B cell (primary cell): ENCODE measurements at regions of chr12 and their contacts with region 1.

Region 1: GRCh38 chr12:116599285-116600136 is 40.3 kb downstream of the MAP1LC3B2 start:
- DNase-seq: peak; percentile 72
- ATAC-seq: peak; percentile 77
- H3K4me3 ChIP-seq: peak overlapping the region in 1 of 5 experiments; percentile 23
- H3K4me3 Mint-ChIP-seq: peak overlapping the region; percentile 64
- H3K27ac ChIP-seq: no peak overlapping the region
- H3K27ac Mint-ChIP-seq: peak overlapping the region; percentile 74
- H3K4me1 ChIP-seq: peaks cover 22 to 29% of the 10 kb centered on the region in 2 donors
- H3K4me1 Mint-ChIP-seq: peaks cover 33% of the 10 kb centered on the region
- H3K27me3 ChIP-seq: peaks cover 0 to 9% (median under 1%) of the 10 kb centered on the region in 4 experiments
- H3K27me3 Mint-ChIP-seq: no peaks in the 10 kb centered on the region
- CTCF ChIP-seq: peak; percentile 57

Region 2: DNA sequence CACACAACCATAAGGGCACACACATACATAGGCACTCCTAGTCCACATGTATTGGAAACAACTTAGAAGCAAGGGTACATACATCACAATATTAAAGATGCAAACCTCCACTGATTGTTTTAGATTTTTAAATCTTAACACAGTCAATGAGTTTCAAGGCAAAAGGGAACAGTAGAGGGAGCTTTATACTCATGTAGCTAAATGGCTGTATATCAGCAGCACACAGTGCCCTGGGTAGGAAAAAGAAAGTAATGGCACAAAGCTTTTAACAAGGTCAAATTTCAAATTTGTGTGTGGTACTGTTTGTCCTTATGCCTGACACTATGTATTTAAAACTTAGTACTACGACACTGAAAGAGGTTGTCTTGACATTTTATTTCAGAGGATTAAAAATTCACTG is 584.0 kb before region 1 on chr12:
- CTCF ChIA-PET with region 1: interaction called, 14 read pairs
- POLR2A ChIA-PET with region 1: no interaction called
- intact Hi-C with region 1: no loop called
- DNase-seq: peak; percentile 27
- ATAC-seq: peak; percentile 49
- H3K4me3 ChIP-seq: no peak overlapping the region
- H3K4me3 Mint-ChIP-seq: no peak overlapping the region
- H3K27ac ChIP-seq: no peak overlapping the region
- H3K27ac Mint-ChIP-seq: no peak overlapping the region
- H3K4me1 ChIP-seq: no peaks in the 10 kb centered on the region
- H3K4me1 Mint-ChIP-seq: no peaks in the 10 kb centered on the region
- H3K27me3 ChIP-seq: no peaks in the 10 kb centered on the region
- H3K27me3 Mint-ChIP-seq: no peaks in the 10 kb centered on the region
- CTCF ChIP-seq: peak; percentile 27

Region 3: DNA sequence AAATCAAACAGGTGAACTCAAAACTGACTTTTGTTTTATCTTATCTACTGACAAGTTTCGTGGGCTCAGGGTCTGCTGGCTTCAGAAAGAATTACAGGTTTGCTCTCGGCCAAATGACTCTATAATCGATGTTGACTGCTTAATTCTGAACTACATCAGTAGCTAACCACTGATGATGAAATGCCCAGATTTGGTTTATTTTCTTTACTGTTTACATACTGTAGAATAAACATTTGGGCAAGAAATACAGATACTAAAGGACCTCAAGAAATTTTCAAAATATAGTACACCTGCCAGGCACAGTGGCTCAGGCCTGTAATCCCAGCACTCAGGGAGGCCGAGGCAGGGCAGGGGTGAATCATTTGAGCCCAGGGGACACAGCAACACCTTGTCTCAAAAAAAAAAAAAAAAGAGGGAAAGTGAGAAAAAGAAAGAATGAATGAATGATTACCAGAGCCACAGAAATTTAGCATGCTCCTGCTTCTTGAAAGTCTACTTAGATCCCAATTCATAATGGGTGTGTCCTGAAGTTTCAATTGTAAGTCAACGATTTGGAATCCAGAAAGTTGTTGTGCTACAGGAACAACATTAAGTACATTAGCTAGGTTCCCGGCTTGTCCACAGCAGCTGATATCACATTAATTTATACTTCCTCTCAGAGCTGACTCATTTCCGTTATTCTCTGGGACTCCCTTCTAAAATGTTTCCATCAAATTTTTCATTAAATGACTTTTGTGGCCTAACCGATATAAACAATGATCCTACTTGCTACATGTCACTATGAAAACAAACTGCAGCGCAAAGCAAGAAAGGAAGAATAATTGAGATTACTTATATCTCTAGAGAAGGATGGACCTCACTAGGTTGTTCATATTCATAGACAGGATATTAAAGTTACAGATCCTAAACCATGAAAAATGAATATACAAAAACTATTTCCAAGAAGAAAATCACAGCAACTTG is 456.3 kb before region 1 on chr12:
- CTCF ChIA-PET with region 1: interaction called, 33 read pairs
- POLR2A ChIA-PET with region 1: no interaction called
- intact Hi-C with region 1: loop called (anchors 1 kb)
- DNase-seq: no peak
- ATAC-seq: peak; percentile 36
- H3K4me3 ChIP-seq: no peak overlapping the region
- H3K4me3 Mint-ChIP-seq: peak overlapping the region; percentile 38
- H3K27ac ChIP-seq: peak overlapping the region in 1 of 2 donors; percentile 41
- H3K27ac Mint-ChIP-seq: peak overlapping the region; percentile 17
- H3K4me1 ChIP-seq: peaks cover 18 to 32% of the 10 kb centered on the region in 2 donors
- H3K4me1 Mint-ChIP-seq: peaks cover 58% of the 10 kb centered on the region
- H3K27me3 ChIP-seq: no peaks in the 10 kb centered on the region
- H3K27me3 Mint-ChIP-seq: no peaks in the 10 kb centered on the region
- CTCF ChIP-seq: no peak

Region 4: GRCh38 chr12:116277393-116278278 is 321.9 kb before region 1 on chr12 and contains the start of gene MED13L:
- CTCF ChIA-PET with region 1: interaction called, 18 read pairs
- POLR2A ChIA-PET with region 1: no interaction called
- intact Hi-C with region 1: loop called (anchors 2 kb)
- DNase-seq: peak; percentile 94
- ATAC-seq: peak; percentile 78
- H3K4me3 ChIP-seq: peak within 1 kb of the TSS; percentile 75 to 91 (median 84)
- H3K4me3 Mint-ChIP-seq: peak within 1 kb of the TSS; percentile 98
- H3K27ac ChIP-seq: peak within 1 kb of the TSS; percentile 22 to 71
- H3K27ac Mint-ChIP-seq: peak within 1 kb of the TSS; percentile 93
- H3K4me1 ChIP-seq: peaks cover 25 to 40% of the 10 kb centered on the region in 2 donors
- H3K4me1 Mint-ChIP-seq: peaks cover 39% of the 10 kb centered on the region
- H3K27me3 ChIP-seq: no peaks in the 10 kb centered on the region
- H3K27me3 Mint-ChIP-seq: no peaks in the 10 kb centered on the region
- CTCF ChIP-seq: peak; percentile 26
- total RNA-seq, gene MED13L: 207 TPM in 2 replicates

Region 5: GRCh38 chr12:116559162-116559935 is 40.2 kb before region 1 on chr12 and contains the start of gene MAP1LC3B2:
- CTCF ChIA-PET with region 1: interaction called, 34 read pairs
- POLR2A ChIA-PET with region 1: no interaction called
- intact Hi-C with region 1: loop called (anchors 1 kb)
- DNase-seq: peak; percentile 96
- ATAC-seq: peak; percentile 79
- H3K4me3 ChIP-seq: peak within 1 kb of the TSS; percentile 38 to 67 (median 45)
- H3K4me3 Mint-ChIP-seq: peak within 1 kb of the TSS; percentile 91
- H3K27ac ChIP-seq: peak within 1 kb of the TSS; percentile 95 to 99
- H3K27ac Mint-ChIP-seq: peak within 1 kb of the TSS; percentile 100
- H3K4me1 ChIP-seq: peaks cover 42 to 54% of the 10 kb centered on the region in 2 donors
- H3K4me1 Mint-ChIP-seq: peaks cover 48% of the 10 kb centered on the region
- H3K27me3 ChIP-seq: no peaks in the 10 kb centered on the region
- H3K27me3 Mint-ChIP-seq: no peaks in the 10 kb centered on the region
- CTCF ChIP-seq: no peak
- total RNA-seq, gene MAP1LC3B2: 1.0 TPM in 1 of 2 replicates, not detected in the other

Region 6: DNA sequence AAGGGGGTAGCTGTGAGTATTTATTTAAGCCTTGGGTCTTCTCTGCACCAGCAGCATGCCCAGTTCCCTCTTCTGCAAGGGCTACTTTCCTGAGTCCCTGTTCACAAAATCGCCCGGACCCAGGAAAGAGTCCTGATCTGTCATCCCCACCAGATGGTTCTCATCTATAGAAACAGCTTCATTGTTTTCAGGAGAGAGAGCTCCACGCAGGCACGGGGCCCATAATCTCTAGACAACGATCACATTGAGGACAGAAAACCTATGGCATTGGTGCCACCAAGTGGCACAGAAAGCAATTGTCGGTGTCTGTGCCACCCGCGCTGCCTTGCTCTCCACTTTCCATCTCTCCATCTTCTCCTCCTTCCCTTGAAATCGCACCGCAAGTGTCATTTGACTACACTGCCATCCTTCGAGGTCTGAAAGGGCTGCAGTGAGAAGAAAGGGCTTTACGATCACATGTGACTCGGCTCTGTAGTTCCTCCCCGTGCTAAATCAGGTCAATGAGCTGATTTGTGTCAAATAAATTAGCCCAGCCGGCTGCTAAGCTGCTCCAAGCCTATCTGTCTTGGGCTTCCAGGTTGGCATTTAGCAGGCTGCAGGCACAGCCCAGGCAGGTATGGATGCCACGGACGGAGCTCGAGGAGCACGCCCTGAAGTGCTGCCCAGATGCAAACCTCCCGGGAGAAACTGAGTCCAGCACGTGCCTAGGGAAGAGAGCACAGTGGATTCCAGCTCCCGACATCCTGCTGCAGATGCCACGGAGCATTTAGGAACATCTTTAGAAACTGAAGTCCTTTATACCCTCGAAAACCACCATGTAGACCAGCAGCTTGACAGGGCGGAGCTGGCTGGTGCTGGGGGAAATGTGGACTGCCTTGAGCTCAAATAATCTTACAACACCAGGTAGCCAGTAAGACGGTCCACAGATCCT is 109.6 kb after region 1 on chr12:
- CTCF ChIA-PET with region 1: interaction called, 10 read pairs
- POLR2A ChIA-PET with region 1: no interaction called
- intact Hi-C with region 1: no loop called
- DNase-seq: peak; percentile 73
- ATAC-seq: peak; percentile 81
- H3K4me3 ChIP-seq: peak overlapping the region in 2 of 5 experiments; percentile 3 to 5
- H3K4me3 Mint-ChIP-seq: peak overlapping the region; percentile 54
- H3K27ac ChIP-seq: no peak overlapping the region
- H3K27ac Mint-ChIP-seq: no peak overlapping the region
- H3K4me1 ChIP-seq: peaks cover 20 to 24% of the 10 kb centered on the region in 2 donors
- H3K4me1 Mint-ChIP-seq: peaks cover 30% of the 10 kb centered on the region
- H3K27me3 ChIP-seq: peaks cover 0 to 8% (median 3%) of the 10 kb centered on the region in 4 experiments
- H3K27me3 Mint-ChIP-seq: peaks cover 9% of the 10 kb centered on the region
- CTCF ChIP-seq: peak; percentile 81